ENCODE measurements at regions of chr15 and their contacts with region 1.

Region 1: DNA sequence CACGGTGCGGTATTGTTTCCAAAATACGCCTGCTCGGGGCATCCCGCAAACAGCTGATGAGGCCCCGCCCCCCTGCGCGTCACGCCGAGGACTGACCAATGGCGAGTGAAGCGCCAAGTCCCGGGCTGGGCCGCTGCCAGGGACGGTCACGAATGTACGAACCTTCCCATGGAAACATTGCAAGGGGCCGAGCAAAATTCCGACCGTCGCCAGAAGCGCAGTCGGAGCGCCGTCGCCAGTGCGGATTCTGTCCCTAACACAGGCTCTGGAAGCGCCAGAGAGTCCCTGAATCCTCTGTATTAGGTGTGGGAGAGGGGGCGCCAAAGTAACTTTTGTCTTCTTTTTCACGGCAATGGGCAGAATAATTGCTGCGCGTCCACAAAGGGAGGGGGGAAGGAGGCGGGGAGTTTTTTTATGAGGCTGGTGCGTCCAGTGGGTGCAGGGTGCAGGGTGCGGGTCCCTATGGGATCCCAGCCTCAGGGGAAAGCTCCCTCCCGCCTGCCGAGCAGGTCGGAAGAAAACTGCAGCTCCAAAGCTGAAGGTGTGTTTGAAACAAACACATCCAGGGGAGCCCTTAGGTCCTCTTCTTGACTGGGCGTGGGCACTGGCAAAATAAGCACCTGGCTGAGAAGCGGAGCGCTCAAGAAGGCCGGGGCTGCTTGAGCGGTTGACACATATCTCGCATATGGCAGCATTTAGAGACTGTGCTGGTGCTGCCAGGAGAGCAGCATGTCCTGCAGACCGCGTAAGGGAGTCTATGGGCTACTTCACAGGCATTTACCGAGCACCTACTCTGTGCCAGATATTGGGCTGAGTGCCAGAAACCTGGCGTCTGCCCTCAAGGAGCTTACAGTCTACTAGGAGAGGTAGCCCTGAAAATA is at the start of gene BMF:
- DNase-seq: peak; percentile 100
- ATAC-seq: peak; percentile 70
- H3K4me3 Mint-ChIP-seq: peak within 1 kb of the TSS; percentile 89
- H3K27ac Mint-ChIP-seq: peak within 1 kb of the TSS; percentile 95
- H3K4me1 Mint-ChIP-seq: peaks cover 69% of the 10 kb centered on the region
- H3K27me3 Mint-ChIP-seq: peaks cover 2% of the 10 kb centered on the region; the same call in 1 of the 2 replicates
- CTCF ChIP-seq: no peak
- total RNA-seq, gene BMF: 32.9 to 36.9 TPM (median 36.6 TPM) in 3 replicates

Region 2: GRCh38 chr15:40044717-40045571 is 64.2 kb before region 1 on chr15:
- CTCF ChIA-PET with region 1: interaction called, 120 read pairs
- POLR2A ChIA-PET with region 1: interaction called, 7 read pairs
- DNase-seq: peak; percentile 85
- ATAC-seq: peak; percentile 96
- H3K4me3 Mint-ChIP-seq: peak overlapping the region; percentile 65
- H3K27ac Mint-ChIP-seq: no peak overlapping the region
- H3K4me1 Mint-ChIP-seq: peaks cover 39% of the 10 kb centered on the region
- H3K27me3 Mint-ChIP-seq: no peaks in the 10 kb centered on the region
- CTCF ChIP-seq: peak; percentile 45; the same call in 1 of the 2 replicates

Region 3: DNA sequence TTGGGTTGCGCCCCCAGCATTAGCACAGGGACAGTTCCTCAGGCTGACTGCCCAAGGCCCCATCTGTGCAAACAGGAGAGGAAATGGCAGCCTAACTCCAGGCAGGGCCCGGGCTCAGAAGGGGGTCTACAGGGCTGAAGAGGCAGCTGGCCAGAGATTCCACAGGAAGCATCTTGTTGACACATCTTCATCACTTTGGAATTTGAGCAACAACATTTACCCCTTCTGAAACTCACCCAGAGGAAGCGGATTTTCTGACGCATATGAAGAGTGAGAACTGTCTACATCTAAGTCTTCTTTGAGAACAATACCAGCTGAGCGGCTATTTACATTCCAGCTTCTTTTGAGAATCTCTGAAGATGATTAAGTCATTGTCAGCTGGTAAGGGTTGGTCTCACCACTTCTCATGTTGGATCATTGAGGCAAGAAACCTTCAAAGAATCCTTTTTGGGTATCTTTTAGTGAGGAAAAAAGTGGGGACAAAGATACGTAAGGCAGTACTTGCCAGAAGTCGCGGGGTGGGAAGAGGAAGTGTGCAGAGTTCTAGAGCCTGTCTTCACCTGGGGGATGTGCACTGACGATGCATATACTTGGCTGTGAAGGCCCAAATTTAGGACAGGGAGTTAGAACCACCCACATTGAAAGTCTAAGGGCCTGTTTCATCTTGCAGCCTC is 44.7 kb before region 1 on chr15:
- CTCF ChIA-PET with region 1: interaction called, 85 read pairs
- POLR2A ChIA-PET with region 1: interaction called, 4 read pairs
- DNase-seq: no peak
- ATAC-seq: 0 out of 2 replicates have a peak, but pooled peaks have one; percentile 19
- H3K4me3 Mint-ChIP-seq: no peak overlapping the region
- H3K27ac Mint-ChIP-seq: no peak overlapping the region; the same call in 1 of the 2 replicates
- H3K4me1 Mint-ChIP-seq: peaks cover 27% of the 10 kb centered on the region
- H3K27me3 Mint-ChIP-seq: no peaks in the 10 kb centered on the region
- CTCF ChIP-seq: no peak

Region 4: DNA sequence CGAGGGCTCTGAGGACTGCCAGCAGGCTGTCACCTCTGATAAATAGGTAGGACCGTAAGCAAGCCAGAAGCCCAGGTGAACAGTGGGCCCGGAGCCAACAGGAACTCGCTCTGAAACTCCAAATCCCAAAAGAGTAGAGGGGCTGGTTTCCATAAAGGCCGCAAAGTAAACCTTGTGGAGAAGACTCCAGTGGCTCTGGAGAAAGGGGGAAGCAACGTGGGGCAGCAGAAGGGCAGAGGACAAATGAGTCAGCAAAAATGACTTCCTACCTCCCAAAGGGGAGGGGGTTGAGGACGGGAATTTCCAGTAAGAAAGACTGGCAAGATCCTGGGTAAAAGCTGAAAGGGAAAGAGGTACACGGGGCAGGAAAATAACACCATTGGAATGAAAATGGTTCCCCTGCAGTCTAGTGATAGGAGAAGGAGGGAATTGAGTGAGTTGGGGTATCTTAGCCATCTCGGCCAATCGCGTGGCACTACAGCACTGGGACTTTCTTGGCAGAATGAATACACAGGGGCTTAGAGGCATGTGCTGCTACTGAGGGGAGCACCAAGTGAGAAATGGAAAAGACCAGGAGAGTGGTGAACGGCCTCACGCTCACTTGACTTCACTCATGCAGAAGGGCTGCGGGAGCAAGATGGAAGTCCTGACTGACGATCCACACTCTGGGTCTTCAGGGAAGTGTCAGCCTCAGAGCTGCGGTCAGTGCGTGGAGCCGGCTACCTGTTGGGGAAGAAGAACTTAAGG is 33.6 kb before region 1 on chr15:
- CTCF ChIA-PET with region 1: interaction called, 22 read pairs
- POLR2A ChIA-PET with region 1: interaction called, 4 read pairs
- DNase-seq: no peak
- ATAC-seq: no peak
- H3K4me3 Mint-ChIP-seq: no peak overlapping the region
- H3K27ac Mint-ChIP-seq: peak overlapping the region; percentile 34
- H3K4me1 Mint-ChIP-seq: peaks cover 23% of the 10 kb centered on the region
- H3K27me3 Mint-ChIP-seq: peaks cover 10% of the 10 kb centered on the region
- CTCF ChIP-seq: no peak

Region 5: DNA sequence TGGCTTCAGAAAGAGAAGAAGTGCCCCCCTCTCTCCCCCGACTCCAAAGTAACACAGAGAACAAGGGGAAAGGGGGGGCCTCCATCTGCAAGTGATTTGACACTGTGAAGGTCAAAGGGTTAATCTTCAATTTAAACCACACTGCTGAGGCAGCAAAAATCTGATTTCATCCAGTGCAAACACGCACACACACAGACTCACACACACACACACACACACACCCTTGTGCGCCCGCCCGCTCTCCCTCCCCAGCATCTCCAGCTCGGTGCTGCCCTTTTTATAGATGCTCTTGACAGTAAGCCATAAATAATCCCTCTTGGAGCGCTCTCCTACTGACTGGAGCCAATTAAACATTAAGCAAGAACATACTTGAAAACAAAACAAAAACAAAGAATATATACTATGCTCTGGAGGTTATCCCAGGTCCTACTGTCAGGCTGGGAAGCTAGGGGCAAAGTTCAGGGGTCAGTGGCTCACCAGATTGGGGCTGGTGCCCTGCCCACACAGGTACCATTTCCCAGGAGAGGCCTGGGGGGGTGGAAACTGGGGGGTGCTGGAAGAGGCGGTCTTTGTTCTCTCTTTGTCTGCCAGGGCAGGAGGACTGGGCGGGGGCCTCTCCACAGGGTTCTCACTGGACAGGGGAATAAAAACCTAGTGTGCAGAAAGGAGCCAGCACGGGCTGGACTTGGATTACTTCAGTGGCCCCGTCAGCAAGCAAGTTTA is 16.7 kb before region 1 on chr15:
- CTCF ChIA-PET with region 1: interaction called, 68 read pairs
- POLR2A ChIA-PET with region 1: interaction called, 4 read pairs
- DNase-seq: no peak
- ATAC-seq: no peak
- H3K4me3 Mint-ChIP-seq: peak overlapping the region; percentile 40
- H3K27ac Mint-ChIP-seq: peak overlapping the region; percentile 62
- H3K4me1 Mint-ChIP-seq: peaks cover 91% of the 10 kb centered on the region
- H3K27me3 Mint-ChIP-seq: no peaks in the 10 kb centered on the region; the same call in 1 of the 2 replicates
- CTCF ChIP-seq: no peak

Region 6: GRCh38 chr15:40155270-40155910 is 46.3 kb after region 1 on chr15:
- CTCF ChIA-PET with region 1: interaction called, 38 read pairs
- POLR2A ChIA-PET with region 1: interaction called, 33 read pairs
- DNase-seq: peak; percentile 76
- ATAC-seq: peak; percentile 92
- H3K4me3 Mint-ChIP-seq: peak overlapping the region; percentile 43
- H3K27ac Mint-ChIP-seq: peak overlapping the region; percentile 93
- H3K4me1 Mint-ChIP-seq: peaks cover 61% of the 10 kb centered on the region
- H3K27me3 Mint-ChIP-seq: no peaks in the 10 kb centered on the region
- CTCF ChIP-seq: no peak

Region 7: DNA sequence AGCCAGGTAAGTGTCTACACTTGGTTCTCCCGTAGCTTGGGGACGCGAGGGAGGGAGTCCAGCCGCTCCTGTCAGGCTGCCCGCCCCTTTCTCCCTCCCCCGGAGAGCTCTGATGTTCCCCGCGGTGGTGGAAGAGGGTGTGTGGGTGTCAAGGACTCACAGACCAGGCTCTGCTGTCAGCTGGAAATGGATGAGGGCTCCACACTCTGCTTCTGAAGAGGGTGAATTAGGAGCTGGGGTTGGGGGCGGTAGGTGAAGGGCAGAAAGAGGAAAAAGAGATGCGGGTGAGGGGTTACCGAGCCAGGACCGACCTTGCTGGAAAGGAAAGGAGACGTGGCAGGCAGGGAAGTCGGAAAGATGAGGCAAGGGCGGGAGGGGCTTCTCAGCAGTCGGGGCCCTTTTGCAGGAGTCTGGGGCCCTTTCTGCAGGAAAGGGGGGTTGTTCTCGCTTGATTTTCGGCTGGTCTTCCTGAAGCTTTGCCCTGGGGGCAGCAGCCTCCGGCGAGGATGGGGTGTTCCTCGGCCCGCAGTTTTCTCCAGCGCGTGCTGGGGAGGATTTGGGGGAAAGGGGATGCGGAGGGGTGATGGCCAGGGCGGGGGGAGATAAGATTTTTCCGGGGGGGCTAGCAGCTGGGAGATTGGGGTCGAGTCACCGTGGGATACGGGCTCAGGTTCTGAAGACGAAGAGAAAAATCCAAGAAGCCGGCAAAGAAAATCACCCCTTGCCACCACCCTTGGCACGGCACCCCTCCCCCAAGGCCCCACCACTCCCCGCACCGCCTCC is 331.1 kb after region 1 on chr15:
- CTCF ChIA-PET with region 1: no interaction called
- POLR2A ChIA-PET with region 1: no interaction called
- DNase-seq: peak; percentile 54
- ATAC-seq: no peak
- H3K4me3 Mint-ChIP-seq: peak overlapping the region; percentile 90
- H3K27ac Mint-ChIP-seq: peak overlapping the region; percentile 78
- H3K4me1 Mint-ChIP-seq: peaks cover 57% of the 10 kb centered on the region
- H3K27me3 Mint-ChIP-seq: peaks cover 7% of the 10 kb centered on the region
- CTCF ChIP-seq: no peak